Panc1 (cell line): ENCODE measurements at regions of chr14 and their contacts with region 1.

Region 1: DNA sequence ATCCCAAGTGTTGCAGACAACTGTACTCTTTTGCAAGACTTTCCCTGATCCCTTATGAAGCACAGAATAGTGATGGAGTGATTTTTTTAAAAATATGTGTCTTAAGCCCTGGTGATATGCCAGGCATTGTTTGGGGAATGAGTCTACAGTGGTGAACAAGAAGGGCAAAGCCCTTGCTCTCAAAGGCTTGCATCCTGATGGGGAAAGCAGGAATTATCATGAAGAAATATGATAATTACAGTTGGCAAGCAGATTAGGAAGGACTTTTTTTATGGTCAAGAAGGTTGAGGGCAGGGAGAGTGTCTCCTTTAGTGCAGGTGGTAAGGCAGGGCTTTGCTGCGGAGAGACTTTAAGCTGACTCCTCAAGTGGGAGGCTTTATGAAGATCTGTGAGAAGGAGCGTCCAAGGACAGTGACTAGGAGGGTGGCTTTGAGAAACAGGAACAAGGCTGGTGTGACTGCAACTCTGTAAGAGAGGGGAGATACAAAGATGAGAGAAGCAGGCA is 100.2 kb downstream of the SYNE2 start:
- DNase-seq: no peak
- ATAC-seq: no peak
- H3K4me3 ChIP-seq: no peak overlapping the region
- H3K27ac ChIP-seq: no peak overlapping the region
- H3K4me1 ChIP-seq: no peaks in the 10 kb centered on the region
- H3K27me3 ChIP-seq: no peaks in the 10 kb centered on the region
- CTCF ChIP-seq: no peak

Region 2: GRCh38 chr14:63922696-63923421 is 30.1 kb before region 1 on chr14:
- CTCF ChIA-PET with region 1: no interaction called
- POLR2A ChIA-PET with region 1: no interaction called
- in situ Hi-C with region 1: no loop called
- intact Hi-C with region 1: no loop called
- DNase-seq: no peak
- ATAC-seq: no peak
- H3K4me3 ChIP-seq: no peak overlapping the region
- H3K27ac ChIP-seq: no peak overlapping the region
- H3K4me1 ChIP-seq: no peaks in the 10 kb centered on the region
- H3K27me3 ChIP-seq: no peaks in the 10 kb centered on the region
- CTCF ChIP-seq: no peak

Region 3: DNA sequence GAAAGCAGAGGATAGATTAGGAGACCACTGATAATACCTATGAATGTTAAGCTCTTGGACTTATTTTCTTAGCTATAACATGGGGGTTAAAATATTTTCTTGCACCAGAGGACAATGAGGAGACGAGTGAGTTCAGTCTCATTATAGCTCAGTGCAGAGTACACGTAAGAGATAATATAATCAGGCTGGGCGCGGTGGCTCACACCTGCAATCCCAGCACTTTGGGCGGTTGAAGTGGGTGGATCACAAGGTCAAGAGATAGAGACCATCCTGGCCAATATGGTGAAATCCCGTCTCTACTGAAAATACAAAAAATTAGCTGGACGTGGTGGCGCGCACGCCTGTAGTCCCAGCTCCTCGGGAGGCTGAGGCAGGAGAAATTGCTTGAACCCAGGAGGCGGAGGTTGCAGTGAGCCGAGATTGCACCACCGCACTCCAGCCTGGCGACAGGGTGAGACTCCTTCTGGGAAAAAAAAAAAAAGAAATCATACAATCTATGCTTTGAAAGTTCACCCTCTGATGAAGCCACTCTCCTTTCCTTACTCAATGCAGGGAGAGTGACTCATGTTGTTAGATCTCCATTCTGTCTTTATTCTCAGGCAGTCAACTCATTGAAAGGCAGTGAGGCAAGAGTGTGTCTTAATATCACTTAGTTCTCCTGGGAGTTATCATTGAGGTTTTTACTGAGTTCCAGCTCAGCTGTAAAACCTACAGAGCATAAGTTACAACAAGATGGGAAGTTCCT is 34.0 kb after region 1 on chr14:
- CTCF ChIA-PET with region 1: no interaction called
- POLR2A ChIA-PET with region 1: no interaction called
- in situ Hi-C with region 1: no loop called
- intact Hi-C with region 1: no loop called
- DNase-seq: no peak
- ATAC-seq: no peak
- H3K4me3 ChIP-seq: no peak overlapping the region
- H3K27ac ChIP-seq: no peak overlapping the region
- H3K4me1 ChIP-seq: no peaks in the 10 kb centered on the region
- H3K27me3 ChIP-seq: no peaks in the 10 kb centered on the region
- CTCF ChIP-seq: no peak

Region 4: DNA sequence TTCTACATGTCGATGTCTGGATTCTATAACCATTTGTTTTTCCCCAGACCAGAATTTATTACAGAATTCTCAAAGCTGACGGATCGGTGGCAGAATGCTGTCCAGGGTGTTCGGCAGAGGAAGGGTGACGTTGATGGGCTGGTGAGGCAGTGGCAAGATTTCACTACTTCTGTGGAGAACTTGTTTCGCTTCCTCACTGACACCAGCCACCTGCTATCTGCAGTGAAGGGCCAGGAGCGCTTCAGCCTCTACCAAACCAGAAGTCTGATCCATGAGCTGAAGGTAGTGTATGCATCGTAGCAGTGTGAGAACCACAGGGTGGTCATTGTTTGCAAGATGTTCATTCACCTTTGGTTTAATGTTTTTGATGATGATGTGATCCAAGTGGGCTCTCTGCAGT is 217.2 kb after region 1 on chr14:
- CTCF ChIA-PET with region 1: interaction called, 10 read pairs
- POLR2A ChIA-PET with region 1: no interaction called
- in situ Hi-C with region 1: no loop called
- intact Hi-C with region 1: no loop called
- DNase-seq: no peak
- ATAC-seq: no peak
- H3K4me3 ChIP-seq: no peak overlapping the region
- H3K27ac ChIP-seq: no peak overlapping the region
- H3K4me1 ChIP-seq: no peaks in the 10 kb centered on the region
- H3K27me3 ChIP-seq: no peaks in the 10 kb centered on the region
- CTCF ChIP-seq: no peak